Colonic mucosa (tissue), 4 donors: ENCODE measurements at regions of chr1 and their contacts with region 1.

Region 1: GRCh38 chr1:114979278-114979891 is 50.2 kb upstream of the TSHB start:
- DNase-seq: peak; percentile 65
- H3K4me3 ChIP-seq: no peak overlapping the region
- H3K27ac ChIP-seq: no peak overlapping the region
- H3K4me1 ChIP-seq: no peaks in the 10 kb centered on the region
- H3K27me3 ChIP-seq: no peaks in the 10 kb centered on the region
- CTCF ChIP-seq: peak; percentile 76

Region 2: DNA sequence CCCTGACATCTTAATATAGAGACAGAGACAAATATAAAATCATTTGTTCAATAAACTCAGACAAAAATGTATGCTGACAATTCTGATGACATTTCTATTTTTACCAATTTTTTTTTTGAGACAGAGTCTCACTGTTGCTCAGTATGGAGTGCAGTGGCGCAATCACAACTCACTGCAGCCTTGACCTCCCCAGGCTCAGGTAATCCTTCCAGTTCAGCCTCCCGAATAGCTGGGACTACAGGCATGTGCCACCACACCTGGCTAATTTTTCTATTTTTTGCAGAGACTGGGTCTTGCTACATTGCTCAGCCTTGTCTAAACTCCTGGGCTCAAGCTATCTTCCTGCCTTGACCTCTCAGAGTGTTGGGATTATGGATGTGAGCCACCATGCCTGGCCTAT is 185.3 kb before region 1 on chr1:
- intact Hi-C with region 1: no loop called
- DNase-seq: no peak
- H3K4me3 ChIP-seq: no peak overlapping the region
- H3K27ac ChIP-seq: no peak overlapping the region
- H3K4me1 ChIP-seq: no peaks in the 10 kb centered on the region
- H3K27me3 ChIP-seq: no peaks in the 10 kb centered on the region
- CTCF ChIP-seq: no peak

Region 3: DNA sequence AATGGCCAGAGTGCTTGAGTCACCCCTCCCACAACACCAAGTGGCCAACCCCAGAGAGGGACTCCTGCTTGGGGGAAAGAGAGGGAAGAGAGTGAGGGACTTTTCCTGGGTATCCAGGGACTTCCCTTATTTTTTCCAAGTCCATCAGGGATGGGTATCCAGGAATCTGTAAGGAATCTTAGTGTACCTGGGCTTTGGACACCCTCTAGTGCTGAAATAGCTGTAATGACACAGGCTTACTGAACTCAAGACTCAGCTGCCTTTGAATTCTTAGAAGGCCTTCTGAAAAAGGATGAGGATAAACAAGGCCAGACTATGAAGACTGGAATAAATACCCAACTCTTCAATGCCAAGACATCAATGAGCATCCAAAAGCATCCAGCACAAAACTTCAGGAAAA is 62.3 kb after region 1 on chr1:
- intact Hi-C with region 1: loop called (anchors 5 kb)
- DNase-seq: no peak
- H3K4me3 ChIP-seq: no peak overlapping the region
- H3K27ac ChIP-seq: no peak overlapping the region
- H3K4me1 ChIP-seq: no peaks in the 10 kb centered on the region
- H3K27me3 ChIP-seq: no peaks in the 10 kb centered on the region
- CTCF ChIP-seq: peak; percentile 17

Region 4: GRCh38 chr1:115112496-115113375 is 133.4 kb after region 1 on chr1:
- intact Hi-C with region 1: loop called (anchors 2 kb)
- DNase-seq: peak; percentile 39
- H3K4me3 ChIP-seq: no peak overlapping the region
- H3K27ac ChIP-seq: no peak overlapping the region
- H3K4me1 ChIP-seq: no peaks in the 10 kb centered on the region
- H3K27me3 ChIP-seq: no peaks in the 10 kb centered on the region
- CTCF ChIP-seq: peak; percentile 92